Ascending aorta (tissue), 2 donors: ENCODE measurements at regions of chr21 and their contacts with region 1.

Region 1: DNA sequence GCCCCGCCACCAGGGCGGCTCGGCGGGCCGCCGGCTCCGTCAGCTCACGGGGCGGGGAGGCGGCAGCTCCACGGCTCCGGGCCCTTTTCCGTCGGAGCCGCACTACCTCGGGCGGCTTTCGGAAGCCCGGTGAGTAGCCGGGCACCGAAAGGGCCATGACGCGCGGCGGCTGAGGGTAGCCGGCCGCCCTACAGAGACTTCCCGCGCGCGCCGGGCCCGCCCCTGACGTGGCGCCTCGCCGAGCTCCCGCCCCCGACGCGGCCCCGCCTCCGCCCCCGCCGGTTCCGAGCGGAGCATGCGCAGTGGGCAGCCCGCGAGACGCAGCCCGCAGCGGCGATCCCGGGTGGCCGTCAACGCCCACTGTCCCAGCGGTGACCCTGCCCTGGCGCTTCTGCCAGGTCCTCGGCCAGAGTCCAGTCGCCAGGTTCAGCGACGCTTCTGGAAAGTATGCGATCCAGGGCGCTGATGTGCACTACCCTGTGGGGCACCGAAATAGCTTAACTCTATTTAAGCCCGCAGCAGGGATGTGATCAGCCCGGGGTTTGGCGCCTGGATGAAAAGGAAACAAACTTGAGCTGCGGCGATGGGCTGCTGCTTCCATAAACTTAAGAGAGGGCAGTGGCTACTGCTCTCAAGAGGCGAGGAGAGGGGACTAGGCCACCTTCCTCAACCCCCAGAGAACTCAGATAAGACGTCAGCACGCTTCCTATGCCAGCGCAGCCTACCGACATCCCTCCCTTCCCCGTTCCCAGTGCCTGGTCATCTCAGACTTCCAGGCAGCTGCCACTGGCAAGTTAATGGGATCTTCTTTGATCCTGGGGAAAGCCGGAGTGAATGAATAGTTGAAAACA is at the start of gene DONSON:
- DNase-seq: peak; percentile 45 to 92
- H3K4me3 ChIP-seq: peak within 1 kb of the TSS; percentile 93 to 97
- H3K27ac ChIP-seq: peak within 1 kb of the TSS; percentile 90 to 96
- H3K4me1 ChIP-seq: peaks cover 0 to 9% of the 10 kb centered on the region in 2 donors
- H3K27me3 ChIP-seq: no peaks in the 10 kb centered on the region
- CTCF ChIP-seq: no peak
- total RNA-seq, gene DONSON: 0.53 TPM

Region 2: GRCh38 chr21:33491373-33492102 is 97.2 kb before region 1 on chr21 and contains the start of gene DNAJC28:
- intact Hi-C with region 1: loop called (anchors 5 kb)
- DNase-seq: peak; percentile 81 to 97
- H3K4me3 ChIP-seq: peak within 1 kb of the TSS; percentile 69 to 75
- H3K27ac ChIP-seq: peak within 1 kb of the TSS; percentile 72 to 79
- H3K4me1 ChIP-seq: no peaks in the 10 kb centered on the region
- H3K27me3 ChIP-seq: no peaks in the 10 kb centered on the region
- CTCF ChIP-seq: no peak
- total RNA-seq, gene DNAJC28: 1.5 TPM

Region 3: DNA sequence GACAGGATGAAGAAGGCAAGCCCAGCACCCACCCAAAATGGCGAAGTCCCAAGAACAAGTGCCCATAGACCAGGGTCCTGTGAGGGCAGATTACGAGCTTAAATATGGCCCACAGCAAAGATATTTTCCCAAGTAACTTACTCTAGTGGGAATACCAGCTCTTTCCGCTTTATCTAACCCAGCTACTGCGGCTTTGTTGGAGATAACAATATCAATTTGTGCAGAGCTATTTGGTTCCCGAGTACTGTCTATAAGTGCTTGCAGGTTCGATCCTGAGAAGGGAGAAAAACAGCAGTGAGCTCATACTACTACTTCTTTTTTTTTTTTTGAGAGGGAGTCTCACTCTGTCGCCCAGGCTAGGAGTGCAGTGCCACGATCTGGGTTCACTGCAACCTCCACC is 82.9 kb before region 1 on chr21:
- intact Hi-C with region 1: no loop called
- DNase-seq: no peak
- H3K4me3 ChIP-seq: no peak overlapping the region
- H3K27ac ChIP-seq: no peak overlapping the region
- H3K4me1 ChIP-seq: no peaks in the 10 kb centered on the region
- H3K27me3 ChIP-seq: no peaks in the 10 kb centered on the region
- CTCF ChIP-seq: no peak

Region 4: GRCh38 chr21:33542640-33543504 is 45.8 kb before region 1 on chr21 and contains the start of gene SON:
- intact Hi-C with region 1: loop called (anchors 1 kb)
- DNase-seq: peak; percentile 98 to 99
- H3K4me3 ChIP-seq: peak within 1 kb of the TSS; percentile 79 to 82
- H3K27ac ChIP-seq: peak within 1 kb of the TSS; percentile 98 to 99
- H3K4me1 ChIP-seq: peaks cover 0 to 18% of the 10 kb centered on the region in 2 donors
- H3K27me3 ChIP-seq: no peaks in the 10 kb centered on the region
- CTCF ChIP-seq: no peak
- total RNA-seq, gene SON: 179 TPM

Region 5: DNA sequence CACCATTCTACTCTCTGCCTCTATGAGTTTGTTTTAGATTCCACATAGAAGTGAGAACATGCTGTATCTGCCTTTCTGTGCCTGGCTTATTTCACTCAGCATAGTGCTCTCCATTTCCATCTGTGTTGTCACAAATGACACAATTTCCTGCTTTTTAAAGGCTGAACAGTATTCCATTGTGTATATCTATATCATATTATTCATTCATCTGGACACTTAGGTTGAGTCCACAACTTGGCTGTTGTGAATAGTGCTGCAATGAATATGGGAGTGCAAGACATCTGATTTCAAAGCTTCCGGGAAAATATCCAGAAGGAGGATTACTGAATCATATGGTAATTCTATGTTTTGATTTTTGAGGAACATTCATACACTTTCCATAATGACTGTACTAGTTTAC is 19.8 kb after region 1 on chr21:
- intact Hi-C with region 1: loop called (anchors 2 kb)
- DNase-seq: no peak
- H3K4me3 ChIP-seq: no peak overlapping the region
- H3K27ac ChIP-seq: no peak overlapping the region
- H3K4me1 ChIP-seq: no peaks in the 10 kb centered on the region
- H3K27me3 ChIP-seq: no peaks in the 10 kb centered on the region
- CTCF ChIP-seq: no peak